AG04449 (cell line): ENCODE measurements at regions of chr6 and their contacts with region 1.

Region 1: GRCh38 chr6:89371849-89372505 is 19.5 kb upstream of the UBE2J1 start:
- DNase-seq: no peak
- H3K4me3 ChIP-seq: no peak overlapping the region
- CTCF ChIP-seq: peak; percentile 98

Region 2: GRCh38 chr6:89172131-89172530 is 199.8 kb before region 1 on chr6:
- CTCF ChIA-PET with region 1: no interaction called
- POLR2A ChIA-PET with region 1: no interaction called
- DNase-seq: no peak
- H3K4me3 ChIP-seq: no peak overlapping the region
- CTCF ChIP-seq: no peak

Region 3: DNA sequence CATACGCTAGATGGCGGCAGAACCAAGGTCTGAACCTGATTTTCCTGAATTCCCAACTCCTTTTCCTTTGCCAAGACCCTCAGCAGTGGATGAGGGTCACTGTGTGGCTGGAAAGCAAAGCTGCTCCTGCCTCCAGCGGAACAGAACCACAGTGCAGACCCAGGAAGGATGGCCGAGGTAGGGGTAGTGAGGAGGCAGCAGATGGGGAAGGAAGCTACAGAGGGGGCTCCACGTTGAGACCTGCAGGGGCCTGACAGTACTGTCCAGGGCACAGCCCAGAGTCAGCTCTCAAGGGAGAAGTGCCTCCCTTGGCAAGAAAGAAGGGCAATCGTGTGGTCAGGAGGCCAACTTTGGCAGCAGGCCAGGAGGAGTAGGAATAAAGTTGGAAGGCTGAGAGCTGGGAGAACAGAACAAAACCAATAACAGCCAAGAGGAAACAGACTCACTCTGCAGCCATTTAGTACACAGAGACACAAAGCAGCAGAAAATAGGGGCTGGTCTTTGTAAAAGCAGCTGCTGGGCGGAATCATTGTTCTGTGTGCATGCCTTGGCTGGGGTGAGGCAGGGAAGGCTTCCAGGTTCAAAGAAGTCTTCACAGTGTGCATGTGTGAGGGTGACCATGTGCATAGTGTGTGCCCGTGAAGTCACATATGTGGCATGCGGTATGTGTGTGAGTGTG is 60.0 kb before region 1 on chr6:
- CTCF ChIA-PET with region 1: interaction called, 16 read pairs
- POLR2A ChIA-PET with region 1: no interaction called
- DNase-seq: no peak
- H3K4me3 ChIP-seq: no peak overlapping the region
- CTCF ChIP-seq: peak; percentile 42

Region 4: GRCh38 chr6:89352278-89353117 is 19.5 kb before region 1 on chr6 and contains the start of gene UBE2J1:
- CTCF ChIA-PET with region 1: interaction called, 34 read pairs
- POLR2A ChIA-PET with region 1: no interaction called
- DNase-seq: peak; percentile 69
- H3K4me3 ChIP-seq: peak within 1 kb of the TSS; percentile 90
- CTCF ChIP-seq: no peak

Region 5: GRCh38 chr6:89360415-89360999 is 11.5 kb before region 1 on chr6:
- CTCF ChIA-PET with region 1: interaction called, 68 read pairs
- POLR2A ChIA-PET with region 1: no interaction called
- DNase-seq: peak; percentile 17
- H3K4me3 ChIP-seq: no peak overlapping the region
- CTCF ChIP-seq: no peak

Region 6: GRCh38 chr6:89385156-89385667 is 13.2 kb after region 1 on chr6:
- CTCF ChIA-PET with region 1: interaction called, 31 read pairs
- POLR2A ChIA-PET with region 1: no interaction called
- DNase-seq: no peak
- H3K4me3 ChIP-seq: no peak overlapping the region
- CTCF ChIP-seq: no peak